PC-9 (cell line): ENCODE measurements at regions of chr21 and their contacts with region 1.

Region 1: DNA sequence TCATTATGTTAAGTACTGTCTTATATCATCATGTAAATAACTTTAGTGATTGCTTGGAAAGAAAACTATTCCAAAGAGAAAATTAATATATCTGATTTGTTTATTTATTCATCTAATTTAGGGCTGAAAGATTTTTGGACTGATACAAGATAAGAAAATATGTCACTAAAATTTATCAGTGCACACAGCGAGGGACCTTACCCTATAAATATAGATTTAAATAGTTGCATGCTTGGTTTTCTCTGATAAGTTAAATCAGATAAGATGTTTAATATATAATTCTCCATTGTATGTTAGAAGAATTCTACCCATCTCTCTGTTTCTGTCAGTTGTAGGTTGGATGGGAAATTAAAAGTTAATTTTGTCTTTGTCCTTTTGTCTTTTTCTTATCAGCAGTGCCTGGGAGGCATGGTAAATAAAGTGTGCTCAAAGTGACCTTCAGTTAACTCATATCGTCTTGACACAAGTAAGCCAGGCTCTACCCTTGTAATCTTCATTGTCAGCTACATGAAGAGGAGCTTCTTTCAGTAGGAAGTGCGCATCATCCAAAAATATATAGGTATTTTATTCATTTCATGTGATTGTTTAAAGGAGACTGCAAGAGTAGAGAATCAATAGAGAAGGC is 138.8 kb upstream of the NRIP1 start:
- DNase-seq: no peak
- H3K4me3 ChIP-seq: no peak overlapping the region
- H3K27ac ChIP-seq: no peak overlapping the region
- H3K4me1 ChIP-seq: peaks cover 13% of the 10 kb centered on the region
- H3K27me3 ChIP-seq: no peaks in the 10 kb centered on the region
- CTCF ChIP-seq: no peak

Region 2: DNA sequence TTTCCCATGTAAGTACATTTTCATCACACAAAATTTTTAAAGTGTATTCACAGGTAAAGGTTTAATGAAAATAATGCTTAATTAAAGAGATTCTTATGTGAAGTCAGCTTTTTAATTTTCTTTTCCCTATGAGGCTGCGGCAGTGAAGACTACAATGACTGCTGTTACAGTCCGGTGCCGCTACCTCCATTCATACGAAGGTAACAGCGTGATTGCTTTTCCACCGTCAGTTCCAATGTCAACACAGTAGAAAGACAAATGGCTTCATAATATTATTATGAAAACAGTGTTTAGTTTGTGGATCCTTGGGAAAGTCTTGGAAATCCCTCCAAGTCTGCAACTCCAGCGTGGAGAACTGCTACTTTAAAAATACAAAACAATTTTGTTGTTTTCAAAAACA is 116.1 kb after region 1 on chr21:
- CTCF ChIA-PET with region 1: no interaction called
- POLR2A ChIA-PET with region 1: interaction called, 10 read pairs
- intact Hi-C with region 1: no loop called
- DNase-seq: no peak
- H3K4me3 ChIP-seq: no peak overlapping the region
- H3K27ac ChIP-seq: no peak overlapping the region
- H3K4me1 ChIP-seq: no peaks in the 10 kb centered on the region
- H3K27me3 ChIP-seq: no peaks in the 10 kb centered on the region
- CTCF ChIP-seq: no peak